Heart left ventricle (tissue), 16 donors: ENCODE measurements at regions of chr9 and their contacts with region 1.

Region 1: GRCh38 chr9:112496074-112496722 is 9.6 kb downstream of the KIAA1958 start:
- DNase-seq: no peak
- ATAC-seq: no peak
- H3K4me3 ChIP-seq: no peak overlapping the region
- H3K27ac ChIP-seq: peak overlapping the region in 1 of 12 donors; percentile 19
- H3K4me1 ChIP-seq: peaks cover 0 to 21% (median 0%) of the 10 kb centered on the region in 12 donors
- H3K27me3 ChIP-seq: no peaks in the 10 kb centered on the region
- CTCF ChIP-seq: no peak
- POLR2A ChIP-seq: no peak

Region 2: DNA sequence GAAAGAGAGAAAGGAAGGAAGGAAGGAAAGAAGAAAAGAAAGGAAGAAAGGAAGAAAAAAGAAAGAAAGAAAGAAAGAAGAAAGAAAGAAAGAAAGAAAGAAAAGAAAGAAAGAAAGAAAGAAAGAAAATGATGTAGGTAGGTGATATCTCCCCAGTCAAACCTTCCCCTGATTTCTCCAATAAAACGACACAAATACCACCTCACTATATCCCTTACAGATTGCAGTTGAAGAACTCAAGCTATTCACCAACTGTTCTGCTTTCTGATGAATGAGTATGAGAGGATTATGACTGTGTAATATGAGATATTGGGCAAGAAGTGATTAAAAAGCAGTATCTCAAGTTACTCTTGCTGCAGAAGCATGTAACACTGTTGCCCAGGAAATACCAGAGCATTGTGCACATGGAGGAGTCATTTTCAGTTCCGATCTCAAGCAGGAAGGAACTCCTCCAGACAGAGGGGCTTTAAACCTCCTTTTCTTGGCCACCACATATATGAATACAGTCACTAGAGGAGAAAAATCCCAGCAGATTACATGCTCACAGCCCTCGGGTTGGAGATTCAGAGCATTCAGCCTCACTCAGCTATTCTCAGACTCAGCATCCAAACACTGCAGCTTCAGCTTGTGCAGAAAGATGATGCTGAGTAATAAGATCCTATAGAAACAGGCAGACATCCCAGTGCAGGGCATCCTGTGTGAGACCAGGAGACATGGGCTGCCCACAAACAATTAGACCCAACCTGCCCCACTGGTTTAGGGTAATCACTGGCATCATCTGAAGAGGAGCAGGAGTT is 538.1 kb before region 1 on chr9:
- intact Hi-C with region 1: no loop called
- DNase-seq: no peak
- ATAC-seq: peak; percentile 21 to 74 (median 47)
- H3K4me3 ChIP-seq: peak overlapping the region in 3 of 12 donors; percentile 5 to 28 (median 19)
- H3K27ac ChIP-seq: peak overlapping the region in 1 of 12 donors; percentile 77
- H3K4me1 ChIP-seq: peaks cover 0 to 43% (median 7%) of the 10 kb centered on the region in 12 donors
- H3K27me3 ChIP-seq: no peaks in the 10 kb centered on the region
- CTCF ChIP-seq: no peak
- POLR2A ChIP-seq: no peak

Region 3: GRCh38 chr9:112620388-112620787 is 124.2 kb after region 1 on chr9:
- intact Hi-C with region 1: loop called in 1 of 10 experiments (anchors 5 kb)
- DNase-seq: no peak
- ATAC-seq: no peak
- H3K4me3 ChIP-seq: no peak overlapping the region
- H3K27ac ChIP-seq: no peak overlapping the region
- H3K4me1 ChIP-seq: peaks cover 0 to 11% (median 0%) of the 10 kb centered on the region in 12 donors
- H3K27me3 ChIP-seq: no peaks in the 10 kb centered on the region
- CTCF ChIP-seq: no peak
- POLR2A ChIP-seq: no peak